ENCODE measurements at regions of chr5 and their contacts with region 1.

Region 1: GRCh38 chr5:109439590-109439989 is 29.8 kb upstream of the PJA2 start:
- DNase-seq: no peak
- H3K4me3 ChIP-seq: no peak overlapping the region
- H3K27ac ChIP-seq: no peak overlapping the region
- H3K4me1 ChIP-seq: no peaks in the 10 kb centered on the region
- H3K27me3 ChIP-seq: no peaks in the 10 kb centered on the region
- CTCF ChIP-seq: no peak

Region 2: DNA sequence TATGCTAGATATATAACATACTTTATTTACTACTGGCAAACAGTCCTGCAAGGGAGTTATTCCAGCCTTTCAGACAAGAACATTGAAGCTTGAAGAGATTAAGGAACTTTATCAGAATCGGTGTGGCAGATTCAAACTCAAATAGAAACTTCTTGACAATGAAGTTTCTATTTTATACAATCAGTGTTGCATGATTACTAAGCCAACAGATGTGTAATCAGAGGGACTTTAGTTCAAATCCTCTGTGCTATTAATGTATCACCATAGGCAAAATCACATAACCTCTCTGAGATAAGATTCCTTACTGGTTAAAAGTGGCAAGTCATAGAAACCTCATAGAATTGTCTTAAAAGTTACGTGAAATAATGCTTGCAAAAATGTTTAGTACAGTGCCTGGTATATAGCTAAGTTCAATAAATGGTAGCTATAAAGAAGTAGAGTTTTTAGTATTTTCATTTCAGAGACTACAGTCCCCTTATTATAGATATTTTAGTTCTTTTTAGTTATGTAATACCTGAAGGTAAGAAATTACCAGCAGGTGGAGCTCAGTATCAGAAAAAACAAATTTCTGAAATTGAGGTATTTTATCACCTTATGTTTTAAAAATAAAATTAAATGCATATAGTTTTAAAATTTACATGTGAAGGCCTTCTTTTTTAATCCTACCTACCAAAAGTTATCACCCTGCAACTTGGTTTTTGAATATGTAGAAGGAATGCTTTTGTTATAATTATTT is 519.8 kb before region 1 on chr5:
- CTCF ChIA-PET with region 1: no interaction called
- POLR2A ChIA-PET with region 1: no interaction called
- intact Hi-C with region 1: loop called (anchors 5 kb)
- DNase-seq: peak; percentile 20
- H3K4me3 ChIP-seq: no peak overlapping the region
- H3K27ac ChIP-seq: no peak overlapping the region
- H3K4me1 ChIP-seq: peaks cover 9% of the 10 kb centered on the region
- H3K27me3 ChIP-seq: no peaks in the 10 kb centered on the region
- CTCF ChIP-seq: peak; percentile 57

Region 3: GRCh38 chr5:109136906-109137305 is 302.7 kb before region 1 on chr5:
- CTCF ChIA-PET with region 1: no interaction called
- POLR2A ChIA-PET with region 1: no interaction called
- intact Hi-C with region 1: no loop called
- DNase-seq: no peak
- H3K4me3 ChIP-seq: no peak overlapping the region
- H3K27ac ChIP-seq: no peak overlapping the region
- H3K4me1 ChIP-seq: peaks cover 5% of the 10 kb centered on the region
- H3K27me3 ChIP-seq: no peaks in the 10 kb centered on the region
- CTCF ChIP-seq: no peak

Region 4: GRCh38 chr5:110159202-110159601 is 719.6 kb after region 1 on chr5:
- CTCF ChIA-PET with region 1: no interaction called
- POLR2A ChIA-PET with region 1: no interaction called
- intact Hi-C with region 1: no loop called
- DNase-seq: no peak
- H3K4me3 ChIP-seq: no peak overlapping the region
- H3K27ac ChIP-seq: no peak overlapping the region
- H3K4me1 ChIP-seq: no peaks in the 10 kb centered on the region
- H3K27me3 ChIP-seq: no peaks in the 10 kb centered on the region
- CTCF ChIP-seq: no peak